Left ventricle myocardium inferior (tissue), 1 donor: ENCODE measurements at regions of chr3 and their contacts with region 1.

Region 1: DNA sequence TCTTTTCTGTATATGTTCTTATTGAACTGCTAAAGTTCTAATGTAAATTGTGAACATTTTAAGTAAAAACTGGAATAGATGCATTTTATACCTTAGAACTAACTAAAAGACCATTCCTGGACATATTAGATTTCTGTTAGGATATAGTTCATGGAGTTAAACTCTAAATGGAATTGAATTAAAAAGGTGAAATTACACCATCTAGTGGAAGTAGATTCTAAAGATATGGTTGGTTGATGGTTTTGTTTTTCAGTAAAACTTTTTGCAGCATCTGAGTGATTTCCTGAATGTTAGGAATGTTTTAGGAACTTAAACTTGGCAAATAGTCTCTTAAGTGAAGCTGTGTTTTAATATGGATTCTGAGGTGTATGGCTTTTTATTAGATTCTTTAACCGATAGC is 96.8 kb downstream of the SLMAP start:
- DNase-seq: no peak
- H3K4me3 ChIP-seq: no peak overlapping the region
- H3K27ac ChIP-seq: no peak overlapping the region
- H3K4me1 ChIP-seq: no peaks in the 10 kb centered on the region
- H3K27me3 ChIP-seq: no peaks in the 10 kb centered on the region
- CTCF ChIP-seq: peak; percentile 22

Region 2: GRCh38 chr3:57646723-57647122 is 206.2 kb before region 1 on chr3:
- intact Hi-C with region 1: loop called (anchors 10 kb)
- DNase-seq: no peak
- H3K4me3 ChIP-seq: no peak overlapping the region
- H3K27ac ChIP-seq: peak overlapping the region; percentile 57
- H3K4me1 ChIP-seq: peaks cover 13% of the 10 kb centered on the region
- H3K27me3 ChIP-seq: no peaks in the 10 kb centered on the region
- CTCF ChIP-seq: peak; percentile 54

Region 3: DNA sequence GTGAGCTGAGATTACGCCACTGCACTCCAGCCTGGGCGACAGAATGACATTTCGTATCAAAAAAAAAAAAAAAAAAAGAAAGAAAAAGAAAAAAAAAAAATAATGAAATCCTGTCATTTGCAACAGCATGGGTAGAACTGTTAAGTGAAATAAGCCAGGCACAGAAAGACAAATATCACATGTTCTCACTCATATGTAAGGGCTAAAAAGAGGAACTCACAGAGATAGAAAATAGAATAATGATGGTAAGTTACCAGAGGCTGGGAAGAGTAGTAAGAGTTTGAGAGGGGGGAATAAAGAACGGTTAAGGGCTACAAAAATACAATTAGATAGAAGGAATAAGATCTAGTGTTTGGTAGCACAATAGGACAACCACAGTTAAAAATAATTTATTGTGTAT is 179.7 kb before region 1 on chr3:
- intact Hi-C with region 1: no loop called
- DNase-seq: no peak
- H3K4me3 ChIP-seq: no peak overlapping the region
- H3K27ac ChIP-seq: peak overlapping the region; percentile 37
- H3K4me1 ChIP-seq: peaks cover 44% of the 10 kb centered on the region
- H3K27me3 ChIP-seq: no peaks in the 10 kb centered on the region
- CTCF ChIP-seq: no peak

Region 4: GRCh38 chr3:57706462-57706861 is 146.4 kb before region 1 on chr3:
- intact Hi-C with region 1: no loop called
- DNase-seq: no peak
- H3K4me3 ChIP-seq: no peak overlapping the region
- H3K27ac ChIP-seq: no peak overlapping the region
- H3K4me1 ChIP-seq: no peaks in the 10 kb centered on the region
- H3K27me3 ChIP-seq: no peaks in the 10 kb centered on the region
- CTCF ChIP-seq: no peak